PC-9 (cell line): ENCODE measurements at regions of chrX and their contacts with region 1.

Region 1: DNA sequence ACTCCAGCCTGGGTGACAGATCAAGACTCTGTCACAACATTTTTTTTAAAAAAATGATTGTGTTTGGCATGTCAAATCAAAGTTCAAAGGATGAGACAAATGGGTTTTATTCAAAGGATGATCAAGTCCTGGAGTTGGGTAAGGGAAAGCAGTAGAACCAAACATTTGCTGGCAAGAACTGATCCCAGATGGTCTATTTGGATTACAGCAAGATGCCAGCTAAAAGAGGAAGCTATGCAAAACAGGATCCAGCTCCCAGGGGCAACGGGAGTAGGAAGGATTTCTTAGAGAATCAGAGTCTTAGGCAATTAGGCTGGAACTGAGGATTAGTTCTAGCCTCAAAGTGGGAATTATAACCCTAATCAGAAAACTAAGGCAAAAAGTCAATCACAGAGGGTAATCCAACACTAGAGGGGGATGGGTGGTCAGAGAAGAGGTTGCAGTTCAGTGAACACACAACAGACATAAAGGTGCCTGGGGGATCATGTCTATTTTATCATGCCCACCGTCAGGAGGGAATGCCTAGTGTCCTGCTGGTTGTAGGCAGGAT is 133.0 kb upstream of the PLS3 start:
- DNase-seq: no peak
- H3K4me3 ChIP-seq: no peak overlapping the region
- H3K27ac ChIP-seq: no peak overlapping the region
- H3K4me1 ChIP-seq: no peaks in the 10 kb centered on the region
- H3K27me3 ChIP-seq: no peaks in the 10 kb centered on the region
- CTCF ChIP-seq: no peak

Region 2: GRCh38 chrX:115486510-115486909 is 58.6 kb after region 1 on chrX:
- CTCF ChIA-PET with region 1: interaction called, 13 read pairs
- POLR2A ChIA-PET with region 1: no interaction called
- intact Hi-C with region 1: no loop called
- DNase-seq: no peak
- H3K4me3 ChIP-seq: no peak overlapping the region
- H3K27ac ChIP-seq: no peak overlapping the region
- H3K4me1 ChIP-seq: no peaks in the 10 kb centered on the region
- H3K27me3 ChIP-seq: no peaks in the 10 kb centered on the region
- CTCF ChIP-seq: no peak